Gastrocnemius medialis (tissue), 4 donors: ENCODE measurements at regions of chr12 and their contacts with region 1.

Region 1: DNA sequence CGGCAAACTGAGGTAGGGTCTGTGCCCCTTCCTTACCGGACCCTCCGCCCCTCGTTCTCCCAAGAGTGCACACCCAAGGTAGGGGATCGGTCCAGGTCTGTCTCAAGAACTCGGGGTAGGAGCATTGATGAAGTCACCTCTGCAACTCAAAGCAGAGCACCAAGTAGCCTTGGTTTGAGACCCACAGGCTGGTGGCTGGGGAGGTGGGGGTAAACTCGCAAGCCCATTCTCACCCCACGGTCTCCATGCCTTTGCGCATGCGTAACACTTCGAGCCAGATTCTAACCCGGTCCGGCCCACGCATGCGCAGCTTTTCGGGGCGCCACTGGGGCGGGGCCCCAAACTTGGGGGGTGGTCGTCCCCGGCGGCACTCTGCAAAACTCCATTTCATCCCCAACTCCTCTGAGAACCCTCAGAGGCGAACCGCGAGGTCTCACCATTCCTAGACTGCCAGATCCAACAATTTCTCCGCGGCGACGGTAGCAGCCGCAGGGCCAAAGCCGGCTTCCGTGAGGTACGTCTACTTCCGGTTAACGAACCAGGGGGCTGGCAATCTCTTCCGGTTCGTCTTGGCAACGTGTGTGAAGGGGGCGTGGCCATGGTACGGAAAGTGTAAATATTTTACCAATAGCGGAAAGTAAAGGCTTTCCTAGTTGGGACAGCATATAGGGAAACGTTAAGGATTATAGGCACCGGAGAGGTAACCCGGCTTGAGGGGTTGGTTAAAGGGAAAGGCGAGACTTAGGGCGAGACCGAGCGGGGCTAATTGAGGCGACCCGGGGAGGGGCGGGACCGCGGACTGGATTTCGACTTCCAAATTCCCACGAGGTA is at the start of gene MCRS1:
- DNase-seq: peak; percentile 77 to 82
- ATAC-seq: peak; percentile 91 to 92
- H3K4me3 ChIP-seq: peak within 1 kb of the TSS; percentile 77 to 95 (median 85)
- H3K27ac ChIP-seq: peak within 1 kb of the TSS; percentile 89 to 94 (median 90)
- H3K4me1 ChIP-seq: peaks cover 40 to 50% of the 10 kb centered on the region in 2 donors
- H3K27me3 ChIP-seq: no peaks in the 10 kb centered on the region
- CTCF ChIP-seq: no peak
- POLR2A ChIP-seq: peak; percentile 47 to 71
- total RNA-seq, gene MCRS1: 28.7 to 62.0 (median 34.6) TPM

Region 2: GRCh38 chr12:49358483-49359141 is 209.2 kb before region 1 on chr12:
- in situ Hi-C with region 1: no loop called
- intact Hi-C with region 1: loop called (anchors 1 kb)
- DNase-seq: peak in 1 of 2 donors; percentile 53
- ATAC-seq: peak; percentile 79 to 94
- H3K4me3 ChIP-seq: no peak overlapping the region
- H3K27ac ChIP-seq: no peak overlapping the region
- H3K4me1 ChIP-seq: peaks cover 0 to 7% of the 10 kb centered on the region in 2 donors
- H3K27me3 ChIP-seq: no peaks in the 10 kb centered on the region
- CTCF ChIP-seq: peak; percentile 82 to 92 (median 84)
- POLR2A ChIP-seq: no peak

Region 3: DNA sequence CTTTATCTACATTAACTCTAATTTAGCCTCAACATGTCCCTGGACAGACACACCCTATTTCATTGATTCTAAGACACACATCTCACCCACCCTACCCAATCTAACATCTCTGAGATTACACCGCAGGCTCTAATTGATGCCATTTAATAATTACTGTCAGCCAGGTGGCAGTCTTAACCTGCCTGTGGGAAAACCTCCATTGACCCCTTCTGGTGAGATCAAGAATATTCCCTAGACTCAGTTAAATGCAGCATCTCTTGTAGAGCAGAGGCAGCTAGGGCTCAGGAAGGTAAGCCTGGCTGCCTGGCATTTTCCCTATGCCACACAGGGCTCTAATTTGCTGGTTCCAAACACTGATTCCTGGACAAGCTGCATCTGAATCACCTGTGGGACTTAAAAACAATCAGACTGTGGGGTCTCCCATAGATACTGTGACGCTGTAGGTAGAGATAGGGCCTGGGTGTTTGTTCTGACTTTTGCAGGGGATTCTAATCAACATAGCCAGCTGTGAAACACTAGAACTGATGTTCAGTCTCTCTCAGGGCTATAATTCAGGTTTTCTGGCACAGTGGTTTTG is 14.2 kb before region 1 on chr12:
- in situ Hi-C with region 1: no loop called
- intact Hi-C with region 1: loop called (anchors 2 kb)
- DNase-seq: no peak
- ATAC-seq: no peak
- H3K4me3 ChIP-seq: no peak overlapping the region
- H3K27ac ChIP-seq: no peak overlapping the region
- H3K4me1 ChIP-seq: peaks cover 19 to 22% of the 10 kb centered on the region in 2 donors
- H3K27me3 ChIP-seq: peaks cover 0 to 10% (median 0%) of the 10 kb centered on the region in 3 donors
- CTCF ChIP-seq: peak in 3 of 5 experiments; percentile 7 to 39 (median 15)
- POLR2A ChIP-seq: no peak

Region 4: GRCh38 chr12:49623142-49623904 is 55.5 kb after region 1 on chr12 and contains the start of gene PRPF40B:
- in situ Hi-C with region 1: no loop called
- intact Hi-C with region 1: loop called (anchors 1 kb)
- DNase-seq: peak; percentile 80 to 90
- ATAC-seq: peak; percentile 87 to 88
- H3K4me3 ChIP-seq: peak within 1 kb of the TSS; percentile 52 to 84 (median 65)
- H3K27ac ChIP-seq: peak within 1 kb of the TSS; percentile 80 to 91 (median 84)
- H3K4me1 ChIP-seq: peaks cover 11 to 15% of the 10 kb centered on the region in 2 donors
- H3K27me3 ChIP-seq: no peaks in the 10 kb centered on the region
- CTCF ChIP-seq: peak; percentile 36 to 65 (median 54)
- POLR2A ChIP-seq: peak; percentile 91 to 94
- total RNA-seq, gene PRPF40B: 17.6 to 21.3 (median 20.2) TPM

Region 5: DNA sequence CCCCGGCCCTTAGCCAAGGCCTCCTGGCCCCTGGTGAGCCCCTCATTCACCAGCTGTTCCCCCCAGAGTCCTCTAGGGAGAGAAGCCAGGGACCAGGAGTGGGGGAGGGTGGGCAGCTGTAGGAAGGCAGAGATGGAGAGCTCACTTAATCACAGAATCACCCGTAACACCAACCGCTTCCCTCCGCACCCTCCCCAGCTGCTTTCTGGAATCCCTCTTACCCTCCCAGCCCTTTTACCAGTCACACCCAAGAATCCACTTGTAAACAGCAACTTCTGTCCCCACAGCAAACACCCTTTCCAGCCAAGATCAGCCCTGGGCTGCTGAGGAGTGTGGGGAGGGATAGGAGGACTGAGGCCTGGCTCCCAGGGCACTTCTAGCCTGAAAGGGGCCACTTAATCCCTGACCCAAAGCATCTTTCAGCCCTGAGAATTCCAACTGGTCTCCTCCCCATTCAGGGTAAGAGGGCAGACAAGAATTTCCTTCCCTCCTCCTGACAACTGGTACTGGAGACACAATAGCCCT is 241.6 kb after region 1 on chr12:
- in situ Hi-C with region 1: no loop called
- intact Hi-C with region 1: no loop called
- DNase-seq: peak in 1 of 2 donors; percentile 52
- ATAC-seq: peak; percentile 52 to 58
- H3K4me3 ChIP-seq: peak overlapping the region in 2 of 4 donors; percentile 15 to 27
- H3K27ac ChIP-seq: peak overlapping the region; percentile 66 to 77 (median 76)
- H3K4me1 ChIP-seq: peaks cover 32 to 35% of the 10 kb centered on the region in 2 donors
- H3K27me3 ChIP-seq: no peaks in the 10 kb centered on the region
- CTCF ChIP-seq: no peak
- POLR2A ChIP-seq: no peak